Activated CD8-positive, alpha-beta T cell treated with anti-CD3 and anti-CD28 coated beads, Interleukin-2, amount 10 ng/mL, durations not matched to agents 7 days and 5 days (primary cell): ENCODE measurements at regions of chr4 and their contacts with region 1.

Region 1: DNA sequence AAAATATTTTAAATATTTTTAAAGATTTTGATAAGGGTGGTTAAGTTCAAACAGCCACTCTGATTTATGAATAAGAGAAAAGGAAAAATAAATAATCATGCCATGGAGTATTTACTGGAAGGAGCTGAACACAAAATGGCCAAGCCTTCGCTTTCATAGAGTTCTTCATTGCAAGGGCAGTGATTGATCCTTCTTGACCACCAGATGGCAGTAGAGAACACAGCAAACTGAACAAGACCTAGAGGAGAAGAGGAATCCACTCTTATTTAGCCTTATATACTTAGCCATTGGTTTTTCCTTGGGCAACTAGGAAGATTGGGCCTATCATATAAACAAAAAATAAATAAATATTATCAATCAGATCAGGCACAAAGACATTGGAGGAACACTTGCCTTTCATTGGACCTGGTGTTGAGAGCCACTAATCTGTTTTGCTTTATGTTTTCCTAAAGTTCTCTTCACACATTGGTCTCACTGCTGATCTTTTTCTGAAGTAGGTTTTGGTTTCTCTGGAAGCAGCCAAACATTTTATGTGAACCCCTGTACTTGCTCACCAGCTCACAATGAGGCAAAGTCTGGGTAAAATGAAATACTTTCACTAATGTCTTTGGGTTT is 58.1 kb upstream of the PARM1 start:
- DNase-seq: peak; percentile 44
- ATAC-seq: peak; percentile 72
- H3K4me3 Mint-ChIP-seq: no peak overlapping the region
- H3K27ac Mint-ChIP-seq: no peak overlapping the region
- H3K4me1 Mint-ChIP-seq: no peaks in the 10 kb centered on the region
- H3K27me3 Mint-ChIP-seq: no peaks in the 10 kb centered on the region

Region 2: DNA sequence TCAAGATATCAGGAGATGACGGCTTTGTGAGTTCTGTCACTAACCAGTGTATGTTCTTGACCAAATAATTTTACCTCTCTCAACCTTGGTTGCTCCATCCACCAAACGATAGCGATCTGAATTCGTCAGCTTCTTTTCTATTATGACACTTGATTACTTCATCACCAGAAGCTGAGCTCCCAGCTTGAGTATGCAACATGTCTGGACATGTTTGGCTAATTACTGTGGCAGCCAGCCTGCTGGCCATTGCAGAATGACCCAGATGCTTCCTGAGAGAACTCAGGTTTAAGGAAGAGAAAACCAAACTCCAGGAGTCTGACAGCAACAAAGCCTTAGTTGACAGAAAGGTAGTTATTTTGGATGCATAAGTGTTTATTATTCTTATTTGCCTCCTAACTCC is 11.6 kb after region 1 on chr4:
- CTCF ChIA-PET with region 1: interaction called, 24 read pairs
- POLR2A ChIA-PET with region 1: no interaction called
- DNase-seq: no peak
- ATAC-seq: no peak
- H3K4me3 Mint-ChIP-seq: no peak overlapping the region
- H3K27ac Mint-ChIP-seq: no peak overlapping the region
- H3K4me1 Mint-ChIP-seq: no peaks in the 10 kb centered on the region
- H3K27me3 Mint-ChIP-seq: peaks cover 2% of the 10 kb centered on the region